Left ventricle myocardium inferior (tissue), 1 donor: ENCODE measurements at regions of chr4 and their contacts with region 1.

Region 1: GRCh38 chr4:118772081-118772766 is 63.7 kb downstream of the SEC24D start:
- DNase-seq: no peak
- H3K4me3 ChIP-seq: peak overlapping the region; percentile 41
- H3K27ac ChIP-seq: peak overlapping the region; percentile 81
- H3K4me1 ChIP-seq: peaks cover 84% of the 10 kb centered on the region
- H3K27me3 ChIP-seq: no peaks in the 10 kb centered on the region
- CTCF ChIP-seq: peak; percentile 71

Region 2: DNA sequence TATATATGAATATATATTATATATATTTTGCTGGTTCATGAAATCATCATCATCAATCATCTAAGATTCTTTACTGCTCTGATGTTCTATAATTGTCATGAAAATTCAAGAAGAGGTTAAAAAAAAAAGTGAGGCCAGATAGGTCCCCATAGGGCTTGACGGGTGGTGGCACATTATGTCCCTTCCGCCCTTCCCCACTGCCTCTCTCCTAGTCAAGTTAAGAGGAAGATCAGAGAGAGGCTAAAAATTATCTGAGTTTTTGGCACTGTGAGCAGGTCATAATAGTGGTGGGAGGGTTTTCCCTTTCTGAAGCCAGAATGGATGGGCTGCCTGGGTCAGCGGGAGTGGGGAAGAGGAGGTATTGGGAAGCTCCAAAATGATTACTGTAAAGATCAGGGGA is 121.8 kb after region 1 on chr4:
- intact Hi-C with region 1: loop called (anchors 5 kb)
- DNase-seq: no peak
- H3K4me3 ChIP-seq: peak overlapping the region; percentile 72
- H3K27ac ChIP-seq: peak overlapping the region; percentile 88
- H3K4me1 ChIP-seq: peaks cover 64% of the 10 kb centered on the region
- H3K27me3 ChIP-seq: no peaks in the 10 kb centered on the region
- CTCF ChIP-seq: no peak

Region 3: DNA sequence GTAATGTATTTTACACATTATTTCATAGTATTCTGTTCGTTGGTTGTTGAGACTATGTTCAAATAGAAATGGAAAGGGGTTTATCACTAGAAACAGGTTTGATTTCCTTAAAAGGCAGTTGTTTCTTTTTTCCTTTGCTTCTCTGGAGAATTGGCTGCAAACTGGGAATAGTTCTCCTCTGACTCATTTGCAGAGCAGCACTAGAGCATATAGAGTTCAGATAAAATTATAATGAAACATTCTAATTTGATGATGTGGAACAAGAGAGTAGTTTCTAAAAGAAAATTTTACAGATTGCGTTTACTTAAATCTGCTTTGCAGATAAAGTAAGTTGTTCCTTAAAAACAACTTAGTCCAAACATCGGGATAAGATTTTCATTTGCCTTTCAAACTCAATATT is 146.2 kb after region 1 on chr4:
- intact Hi-C with region 1: no loop called
- DNase-seq: no peak
- H3K4me3 ChIP-seq: no peak overlapping the region
- H3K27ac ChIP-seq: peak overlapping the region; percentile 88
- H3K4me1 ChIP-seq: peaks cover 70% of the 10 kb centered on the region
- H3K27me3 ChIP-seq: no peaks in the 10 kb centered on the region
- CTCF ChIP-seq: no peak

Region 4: DNA sequence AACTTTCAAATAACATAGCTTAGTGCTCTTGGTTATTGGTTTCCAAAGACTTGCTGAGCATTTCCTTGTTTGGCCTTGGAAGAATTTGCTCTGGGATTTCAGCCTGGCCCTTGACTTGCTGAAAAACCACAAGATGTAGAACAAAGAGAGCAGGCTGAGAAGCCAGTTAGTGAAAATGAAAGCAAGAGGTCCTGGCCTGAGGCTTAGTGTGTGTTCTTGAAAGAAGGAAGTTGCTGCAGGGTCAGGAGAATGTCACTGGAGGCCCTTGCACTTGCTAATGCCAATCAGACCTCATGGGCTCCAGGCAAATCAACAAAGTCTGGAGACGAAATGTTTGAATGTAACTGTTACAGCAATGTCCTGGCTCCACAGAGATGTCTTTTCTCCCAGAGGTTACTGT is 195.8 kb after region 1 on chr4:
- intact Hi-C with region 1: loop called (anchors 5 kb)
- DNase-seq: no peak
- H3K4me3 ChIP-seq: peak overlapping the region; percentile 32
- H3K27ac ChIP-seq: peak overlapping the region; percentile 78
- H3K4me1 ChIP-seq: peaks cover 100% of the 10 kb centered on the region
- H3K27me3 ChIP-seq: no peaks in the 10 kb centered on the region
- CTCF ChIP-seq: no peak

Region 5: GRCh38 chr4:119151161-119151560 is 378.9 kb after region 1 on chr4:
- intact Hi-C with region 1: no loop called
- DNase-seq: no peak
- H3K4me3 ChIP-seq: peak overlapping the region; percentile 5
- H3K27ac ChIP-seq: peak overlapping the region; percentile 85
- H3K4me1 ChIP-seq: peaks cover 78% of the 10 kb centered on the region
- H3K27me3 ChIP-seq: no peaks in the 10 kb centered on the region
- CTCF ChIP-seq: peak; percentile 18